ENCODE measurements at regions of chr1 and their contacts with region 1.

Region 1: DNA sequence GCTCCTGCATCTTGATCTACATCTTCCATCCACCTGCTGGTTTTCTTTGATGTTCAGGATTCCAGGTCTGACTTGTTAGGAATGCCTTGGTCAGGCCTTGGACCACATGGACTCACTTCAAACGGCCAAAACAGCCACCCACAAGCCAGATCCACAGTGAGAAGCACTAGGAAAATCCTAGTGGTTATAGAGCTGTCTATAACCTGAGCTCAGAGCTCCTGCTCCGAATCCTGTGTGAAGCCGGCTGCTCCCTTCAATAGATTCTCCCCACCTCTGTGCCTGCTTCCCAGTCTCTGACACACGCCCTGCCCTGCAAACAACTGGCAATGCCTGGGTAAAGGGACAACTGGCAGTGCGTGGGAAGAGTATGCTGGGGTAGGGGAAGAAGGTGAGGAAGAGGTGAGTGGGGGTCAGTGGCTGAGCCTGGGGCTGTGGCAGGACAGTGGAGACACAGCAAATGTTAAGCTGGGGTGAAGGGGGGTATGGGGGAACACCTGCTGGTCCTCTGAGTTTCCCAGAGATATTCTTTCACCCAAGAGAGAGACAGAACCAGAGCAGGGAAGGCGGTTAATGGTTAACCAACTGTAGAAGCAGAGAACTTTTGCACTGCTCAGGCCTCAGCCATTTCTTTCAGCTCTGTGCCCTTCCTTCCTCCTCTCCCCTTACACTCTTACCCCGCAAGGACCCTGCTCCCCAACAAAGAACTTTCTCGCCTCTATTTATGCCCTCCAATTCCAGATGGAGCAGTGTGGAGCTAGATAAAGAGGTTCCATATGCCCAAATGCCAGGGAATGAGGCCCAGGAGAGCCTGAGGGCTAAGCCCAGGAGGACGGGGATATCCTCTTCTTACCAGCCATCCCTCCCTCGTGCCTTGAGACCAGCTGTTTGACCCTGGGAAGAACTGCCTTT is 4.5 kb downstream of the PLXNA2 start:
- DNase-seq: no peak
- H3K4me3 ChIP-seq: peak overlapping the region in 52 of 59 donors; percentile 12 to 90 (median 78)
- H3K27ac ChIP-seq: peak overlapping the region in 46 of 59 donors; percentile 1 to 96 (median 56)
- H3K27me3 ChIP-seq: peaks cover 0 to 56% (median 0%) of the 10 kb centered on the region in 45 donors
- CTCF ChIP-seq: no peak

Region 2: GRCh38 chr1:208047476-208047934 is 192.2 kb before region 1 on chr1:
- intact Hi-C with region 1: no loop called
- DNase-seq: peak in 5 of 10 donors; percentile 36 to 73 (median 57)
- H3K4me3 ChIP-seq: no peak overlapping the region
- H3K27ac ChIP-seq: peak overlapping the region in 45 of 59 donors; percentile 2 to 76 (median 48)
- H3K27me3 ChIP-seq: no peaks in the 10 kb centered on the region
- CTCF ChIP-seq: no peak

Region 3: GRCh38 chr1:208081972-208082371 is 157.8 kb before region 1 on chr1:
- intact Hi-C with region 1: loop called (anchors 2 to 5 kb)
- DNase-seq: peak in 3 of 10 donors; percentile 47 to 55 (median 55)
- H3K4me3 ChIP-seq: peak overlapping the region in 19 of 59 donors; percentile 3 to 40 (median 15)
- H3K27ac ChIP-seq: peak overlapping the region in 40 of 59 donors; percentile 4 to 67 (median 45)
- H3K27me3 ChIP-seq: no peaks in the 10 kb centered on the region
- CTCF ChIP-seq: peak in 52 of 56 donors; percentile 16 to 71 (median 55)

Measured in dorsolateral prefrontal cortex (tissue), 120 donors.